Sigmoid colon (tissue), 7 donors: ENCODE measurements at regions of chr6 and their contacts with region 1.

Region 1: GRCh38 chr6:158220786-158221442 is 52.8 kb downstream of the GTF2H5 start:
- DNase-seq: peak; percentile 89
- H3K4me3 ChIP-seq: no peak overlapping the region
- H3K27ac ChIP-seq: no peak overlapping the region
- H3K4me1 ChIP-seq: no peaks in the 10 kb centered on the region
- H3K27me3 ChIP-seq: no peaks in the 10 kb centered on the region
- CTCF ChIP-seq: peak; percentile 56 to 89 (median 82)
- EP300 ChIP-seq: no peak
- POLR2A ChIP-seq: no peak

Region 2: DNA sequence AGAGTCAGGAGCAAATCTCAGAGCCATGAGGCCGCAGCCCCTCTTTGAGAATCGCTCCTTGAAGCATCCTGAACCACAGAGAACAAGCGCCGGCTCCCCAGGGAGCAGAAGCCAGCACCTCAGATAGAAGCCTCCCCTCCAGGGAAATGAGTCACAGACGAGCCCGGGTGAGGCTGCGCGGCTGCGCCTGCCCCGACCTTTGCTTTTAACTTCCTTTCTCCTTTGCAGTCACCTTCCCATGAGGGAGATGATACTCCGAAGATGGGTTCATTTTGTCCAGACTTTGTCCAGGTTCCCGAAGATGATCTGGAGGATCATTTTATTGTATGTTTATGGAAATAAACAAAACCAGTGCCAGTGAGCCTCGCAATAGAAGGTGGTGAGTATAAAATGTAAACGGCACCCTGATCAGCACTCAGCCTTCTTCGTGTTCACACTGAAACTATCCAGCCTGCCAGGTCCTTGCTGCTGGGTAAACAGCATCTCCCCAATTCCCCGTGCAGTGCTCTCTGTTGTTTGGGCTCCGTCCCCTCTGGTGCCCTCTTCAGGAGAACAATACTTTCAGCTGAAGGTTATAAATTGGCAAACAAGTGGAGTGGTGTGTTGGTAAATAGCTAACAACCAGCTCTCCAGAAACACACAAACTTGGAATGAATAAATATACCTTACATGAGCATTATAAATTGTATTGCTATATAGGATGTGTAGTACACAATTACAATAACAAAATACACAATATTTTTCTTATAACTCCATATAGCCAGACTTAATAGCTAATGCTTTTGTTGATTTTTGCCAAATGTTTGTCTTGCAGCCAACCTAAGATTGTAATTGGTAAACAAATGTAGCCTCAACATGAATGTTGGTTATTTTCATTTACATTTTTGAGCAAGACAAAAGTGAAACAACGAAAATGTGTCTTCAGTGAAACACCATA is 297.5 kb after region 1 on chr6:
- intact Hi-C with region 1: loop called (anchors 5 kb)
- DNase-seq: no peak
- H3K4me3 ChIP-seq: peak overlapping the region in 2 of 4 donors; percentile 30
- H3K27ac ChIP-seq: no peak overlapping the region
- H3K4me1 ChIP-seq: peaks cover 0 to 14% (median 10%) of the 10 kb centered on the region in 4 donors
- H3K27me3 ChIP-seq: peaks cover 11 to 64% (median 20%) of the 10 kb centered on the region in 3 donors
- CTCF ChIP-seq: peak in 1 of 4 experiments; percentile 40
- EP300 ChIP-seq: no peak
- POLR2A ChIP-seq: no peak

Region 3: GRCh38 chr6:158605266-158605878 is 384.5 kb after region 1 on chr6:
- intact Hi-C with region 1: loop called (anchors 2 kb)
- DNase-seq: no peak
- H3K4me3 ChIP-seq: no peak overlapping the region
- H3K27ac ChIP-seq: no peak overlapping the region
- H3K4me1 ChIP-seq: no peaks in the 10 kb centered on the region
- H3K27me3 ChIP-seq: no peaks in the 10 kb centered on the region
- CTCF ChIP-seq: peak; percentile 26 to 74 (median 72)
- EP300 ChIP-seq: no peak
- POLR2A ChIP-seq: no peak

Region 4: GRCh38 chr6:158686791-158687381 is 466.0 kb after region 1 on chr6:
- intact Hi-C with region 1: loop called (anchors 5 kb)
- DNase-seq: no peak
- H3K4me3 ChIP-seq: no peak overlapping the region
- H3K27ac ChIP-seq: peak overlapping the region in 1 of 4 donors; percentile 19
- H3K4me1 ChIP-seq: peaks cover 0 to 22% (median 12%) of the 10 kb centered on the region in 4 donors
- H3K27me3 ChIP-seq: no peaks in the 10 kb centered on the region
- CTCF ChIP-seq: no peak
- EP300 ChIP-seq: no peak
- POLR2A ChIP-seq: no peak